CD8-positive, alpha-beta T cell (primary cell): ENCODE measurements at regions of chr19 and their contacts with region 1.

Region 1: DNA sequence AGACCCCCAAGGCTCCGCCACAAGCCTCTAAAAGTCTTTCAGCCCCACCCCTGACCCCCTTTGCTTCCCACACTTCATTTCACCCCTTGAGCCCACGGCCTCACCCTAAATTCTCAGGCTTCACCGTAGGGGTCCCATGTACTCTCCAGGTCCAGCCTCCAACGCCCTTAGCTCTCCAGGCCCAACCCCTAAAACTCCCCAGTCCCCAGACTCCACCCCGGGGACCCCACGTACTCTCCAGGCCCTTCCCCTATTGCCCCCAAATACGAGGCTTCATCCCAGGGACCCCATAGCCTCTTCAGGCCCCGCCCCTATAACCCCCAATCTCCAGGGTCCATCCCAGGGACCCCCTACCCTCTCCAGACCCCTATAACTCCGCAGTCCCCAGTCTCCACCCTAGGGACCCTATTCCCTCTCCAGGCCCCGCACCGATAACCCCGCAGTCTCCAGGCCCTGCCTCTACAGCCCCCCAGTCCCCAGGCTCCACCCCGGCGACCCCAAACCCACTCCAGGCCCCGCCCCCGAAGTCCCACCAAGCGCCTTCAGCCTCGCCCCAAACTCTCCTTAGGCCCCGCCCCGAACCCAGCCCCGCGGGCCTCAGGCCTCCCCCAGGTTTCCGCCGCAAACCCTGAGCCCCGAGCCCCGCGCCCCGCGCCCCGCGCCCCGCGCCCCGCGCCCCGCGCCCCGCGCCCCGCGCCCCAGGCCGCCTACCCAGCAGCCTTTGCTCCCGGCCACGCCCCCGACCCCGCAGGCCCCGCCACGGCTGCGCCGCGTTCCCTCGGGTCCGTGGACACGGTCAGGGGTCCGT is 540 bp downstream of the MED16 start:
- DNase-seq: peak in 5 of 9 experiments; percentile 37 to 54 (median 48)
- ATAC-seq: peak; percentile 35
- H3K4me3 ChIP-seq: peak overlapping the region; percentile 62 to 67
- H3K4me3 Mint-ChIP-seq: peak overlapping the region; percentile 95
- H3K27ac ChIP-seq: peak overlapping the region; percentile 65 to 98
- H3K27ac Mint-ChIP-seq: peak overlapping the region; percentile 100
- H3K4me1 ChIP-seq: peaks cover 11% of the 10 kb centered on the region
- H3K4me1 Mint-ChIP-seq: peaks cover 36% of the 10 kb centered on the region
- H3K27me3 ChIP-seq: no peaks in the 10 kb centered on the region
- H3K27me3 Mint-ChIP-seq: no peaks in the 10 kb centered on the region
- CTCF ChIP-seq: no peak

Region 2: DNA sequence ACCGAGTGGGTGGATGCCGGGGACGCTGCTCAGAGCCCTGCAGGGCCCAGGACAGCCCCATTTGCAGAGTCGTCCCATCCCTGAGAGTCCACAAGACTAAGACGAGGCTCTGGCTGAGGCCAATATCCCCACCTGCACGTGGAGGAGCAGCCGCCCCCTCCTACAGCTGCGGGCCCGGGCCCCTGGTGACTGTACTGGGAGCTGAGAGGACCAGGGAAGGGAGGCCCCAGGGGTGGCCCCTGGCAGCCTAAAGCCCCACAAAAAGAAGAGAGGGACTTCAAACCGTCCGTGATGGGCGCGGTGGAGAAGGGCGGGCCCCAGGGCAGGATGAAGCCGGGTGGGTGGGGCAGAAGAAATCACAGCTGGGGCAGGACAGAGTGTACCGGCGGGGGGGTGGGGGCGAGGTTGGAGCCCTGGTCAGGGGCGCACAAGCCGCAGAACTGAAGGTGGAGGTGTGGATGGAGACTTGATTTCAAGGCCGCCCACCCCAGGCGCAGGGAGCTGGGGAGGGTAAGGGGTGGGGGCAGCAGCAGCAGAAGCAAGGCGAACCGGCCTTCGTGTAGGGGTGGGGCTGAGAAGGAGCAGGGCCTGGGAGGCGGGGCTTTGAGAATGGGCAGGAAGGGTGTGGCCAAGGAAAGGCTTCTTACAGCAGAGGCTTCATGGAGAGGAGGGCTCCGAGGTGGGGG is 20.0 kb before region 1 on chr19:
- CTCF ChIA-PET with region 1: interaction called, 3 read pairs
- POLR2A ChIA-PET with region 1: interaction called, 17 read pairs
- intact Hi-C with region 1: loop called (anchors 1 kb)
- DNase-seq: peak; percentile 72 to 95 (median 87)
- ATAC-seq: peak; percentile 80
- H3K4me3 ChIP-seq: peak overlapping the region; percentile 33 to 50
- H3K4me3 Mint-ChIP-seq: peak overlapping the region; percentile 78
- H3K27ac ChIP-seq: peak overlapping the region; percentile 48 to 69
- H3K27ac Mint-ChIP-seq: peak overlapping the region; percentile 89
- H3K4me1 ChIP-seq: peaks cover 15% of the 10 kb centered on the region
- H3K4me1 Mint-ChIP-seq: peaks cover 11% of the 10 kb centered on the region
- H3K27me3 ChIP-seq: no peaks in the 10 kb centered on the region
- H3K27me3 Mint-ChIP-seq: no peaks in the 10 kb centered on the region
- CTCF ChIP-seq: no peak

Region 3: DNA sequence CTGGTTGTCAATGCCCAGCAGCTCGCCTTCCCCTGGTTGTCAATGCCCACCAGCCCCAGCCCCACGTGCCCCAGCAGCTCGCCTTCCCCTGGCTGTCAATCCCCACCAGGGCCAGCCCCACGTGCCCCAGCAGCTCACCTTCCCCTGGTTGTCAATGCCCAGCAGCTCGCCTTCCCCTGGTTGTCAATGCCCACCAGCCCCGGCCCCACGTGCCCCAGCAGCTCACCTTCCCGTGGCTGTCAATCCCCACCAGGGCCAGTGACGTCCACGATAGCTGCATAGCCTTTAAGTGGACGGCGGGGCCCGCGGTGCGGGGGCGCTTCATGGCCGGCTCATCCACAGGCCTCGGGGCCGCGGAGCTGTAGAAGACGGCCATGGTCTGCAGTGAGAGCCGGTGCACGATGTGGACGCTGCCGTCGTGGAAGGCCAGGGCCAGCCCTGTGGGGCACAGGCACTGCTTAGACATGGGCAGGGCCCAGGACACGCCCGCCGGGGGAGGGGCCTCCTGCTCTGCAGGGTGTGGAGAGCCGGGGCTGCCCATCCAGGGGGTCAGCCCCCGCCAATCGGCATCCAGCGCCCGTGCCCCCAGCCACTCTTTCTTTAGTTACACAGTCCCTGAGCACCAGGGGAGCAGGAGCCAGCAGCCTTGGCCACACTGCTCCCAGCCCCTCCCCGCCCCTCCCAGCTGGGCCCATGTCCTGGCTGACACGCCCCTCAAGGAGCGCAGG is 12.6 kb before region 1 on chr19:
- CTCF ChIA-PET with region 1: interaction called, 3 read pairs
- POLR2A ChIA-PET with region 1: interaction called, 17 read pairs
- intact Hi-C with region 1: no loop called
- DNase-seq: no peak
- ATAC-seq: no peak
- H3K4me3 ChIP-seq: no peak overlapping the region
- H3K4me3 Mint-ChIP-seq: no peak overlapping the region
- H3K27ac ChIP-seq: no peak overlapping the region
- H3K27ac Mint-ChIP-seq: no peak overlapping the region
- H3K4me1 ChIP-seq: no peaks in the 10 kb centered on the region
- H3K4me1 Mint-ChIP-seq: peaks cover 2% of the 10 kb centered on the region
- H3K27me3 ChIP-seq: no peaks in the 10 kb centered on the region
- H3K27me3 Mint-ChIP-seq: no peaks in the 10 kb centered on the region
- CTCF ChIP-seq: no peak

Region 4: DNA sequence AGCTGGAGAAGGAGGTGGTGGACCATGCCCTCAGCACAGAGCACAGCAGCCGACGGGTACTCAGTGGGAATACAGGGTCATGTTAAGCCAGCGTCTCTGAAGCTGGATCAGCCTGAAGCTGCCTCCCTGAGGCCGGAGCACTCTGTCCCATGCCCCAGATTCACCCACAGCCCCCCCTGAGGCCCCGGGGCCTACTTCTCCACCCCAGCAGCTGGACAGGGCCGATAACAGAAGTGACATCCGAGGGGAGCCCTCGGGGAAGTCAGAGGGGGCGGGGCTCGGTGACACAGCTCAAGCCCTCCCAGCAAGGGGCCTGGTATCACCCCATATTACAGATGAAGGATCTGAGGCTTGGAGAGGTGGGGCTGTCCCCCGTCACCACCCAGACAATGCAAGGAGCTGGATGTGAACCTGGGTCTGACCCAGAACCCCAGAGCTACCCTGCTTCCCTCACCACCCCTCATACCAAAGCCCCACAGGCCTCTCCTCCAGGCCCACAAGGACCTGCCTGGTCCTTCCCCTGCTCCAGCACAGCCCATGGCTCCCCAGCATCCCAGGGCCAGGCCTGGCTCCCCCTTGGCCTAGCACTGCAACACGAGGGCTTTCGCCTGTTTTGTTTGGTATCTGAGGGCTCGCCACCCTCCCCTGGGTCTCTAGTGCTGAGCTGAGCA is 14.9 kb after region 1 on chr19:
- CTCF ChIA-PET with region 1: interaction called, 15 read pairs
- POLR2A ChIA-PET with region 1: interaction called, 107 read pairs
- intact Hi-C with region 1: loop called (anchors 1 kb)
- DNase-seq: peak in 5 of 9 experiments; percentile 45 to 65 (median 51)
- ATAC-seq: no peak
- H3K4me3 ChIP-seq: no peak overlapping the region
- H3K4me3 Mint-ChIP-seq: peak overlapping the region; percentile 61
- H3K27ac ChIP-seq: peak overlapping the region; percentile 47 to 56
- H3K27ac Mint-ChIP-seq: peak overlapping the region; percentile 100
- H3K4me1 ChIP-seq: peaks cover 64% of the 10 kb centered on the region
- H3K4me1 Mint-ChIP-seq: peaks cover 56% of the 10 kb centered on the region
- H3K27me3 ChIP-seq: no peaks in the 10 kb centered on the region
- H3K27me3 Mint-ChIP-seq: no peaks in the 10 kb centered on the region
- CTCF ChIP-seq: no peak

Region 5: GRCh38 chr19:944171-944567 is 51.7 kb after region 1 on chr19:
- CTCF ChIA-PET with region 1: no interaction called
- POLR2A ChIA-PET with region 1: no interaction called
- intact Hi-C with region 1: no loop called
- DNase-seq: peak in 1 of 9 experiments; percentile 39
- ATAC-seq: no peak
- H3K4me3 ChIP-seq: no peak overlapping the region
- H3K4me3 Mint-ChIP-seq: no peak overlapping the region
- H3K27ac ChIP-seq: no peak overlapping the region
- H3K27ac Mint-ChIP-seq: no peak overlapping the region
- H3K4me1 ChIP-seq: peaks cover 14% of the 10 kb centered on the region
- H3K4me1 Mint-ChIP-seq: peaks cover 13% of the 10 kb centered on the region
- H3K27me3 ChIP-seq: no peaks in the 10 kb centered on the region
- H3K27me3 Mint-ChIP-seq: no peaks in the 10 kb centered on the region
- CTCF ChIP-seq: no peak

Region 6: DNA sequence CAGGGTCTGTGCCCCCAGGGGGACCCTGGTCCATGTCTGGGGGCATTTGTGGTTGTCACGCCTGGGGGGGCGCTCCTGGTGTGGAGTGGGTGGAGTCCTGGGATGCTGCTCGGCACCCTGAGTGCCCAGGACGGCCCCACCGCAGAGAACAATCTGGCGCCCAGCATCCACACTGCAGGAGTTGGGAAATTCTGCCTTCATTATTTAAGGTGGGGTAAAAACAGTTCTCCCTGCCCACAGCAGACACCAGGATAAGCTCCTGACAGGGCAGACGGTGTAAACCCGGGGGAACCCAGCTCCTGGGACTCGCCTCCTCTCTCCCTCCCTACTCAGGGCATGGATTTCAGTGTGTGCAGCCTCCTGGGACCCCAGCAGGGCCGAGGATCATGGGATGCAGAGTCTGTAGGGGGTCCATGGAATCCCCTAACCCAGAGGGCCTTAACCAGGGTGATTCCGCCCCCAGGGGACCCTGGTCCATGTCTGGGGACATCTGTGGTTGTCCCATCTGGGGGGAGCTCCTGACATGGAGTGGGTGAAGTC is 84.1 kb after region 1 on chr19:
- CTCF ChIA-PET with region 1: no interaction called
- POLR2A ChIA-PET with region 1: no interaction called
- intact Hi-C with region 1: no loop called
- DNase-seq: no peak
- ATAC-seq: no peak
- H3K4me3 ChIP-seq: no peak overlapping the region
- H3K4me3 Mint-ChIP-seq: no peak overlapping the region
- H3K27ac ChIP-seq: no peak overlapping the region
- H3K27ac Mint-ChIP-seq: no peak overlapping the region
- H3K4me1 ChIP-seq: no peaks in the 10 kb centered on the region
- H3K4me1 Mint-ChIP-seq: no peaks in the 10 kb centered on the region
- H3K27me3 ChIP-seq: no peaks in the 10 kb centered on the region
- H3K27me3 Mint-ChIP-seq: no peaks in the 10 kb centered on the region
- CTCF ChIP-seq: no peak